Activated CD8-positive, alpha-beta T cell treated with anti-CD3 and anti-CD28 coated beads for 36 hours (primary cell): ENCODE measurements at regions of chr1 and their contacts with region 1.

Region 1: DNA sequence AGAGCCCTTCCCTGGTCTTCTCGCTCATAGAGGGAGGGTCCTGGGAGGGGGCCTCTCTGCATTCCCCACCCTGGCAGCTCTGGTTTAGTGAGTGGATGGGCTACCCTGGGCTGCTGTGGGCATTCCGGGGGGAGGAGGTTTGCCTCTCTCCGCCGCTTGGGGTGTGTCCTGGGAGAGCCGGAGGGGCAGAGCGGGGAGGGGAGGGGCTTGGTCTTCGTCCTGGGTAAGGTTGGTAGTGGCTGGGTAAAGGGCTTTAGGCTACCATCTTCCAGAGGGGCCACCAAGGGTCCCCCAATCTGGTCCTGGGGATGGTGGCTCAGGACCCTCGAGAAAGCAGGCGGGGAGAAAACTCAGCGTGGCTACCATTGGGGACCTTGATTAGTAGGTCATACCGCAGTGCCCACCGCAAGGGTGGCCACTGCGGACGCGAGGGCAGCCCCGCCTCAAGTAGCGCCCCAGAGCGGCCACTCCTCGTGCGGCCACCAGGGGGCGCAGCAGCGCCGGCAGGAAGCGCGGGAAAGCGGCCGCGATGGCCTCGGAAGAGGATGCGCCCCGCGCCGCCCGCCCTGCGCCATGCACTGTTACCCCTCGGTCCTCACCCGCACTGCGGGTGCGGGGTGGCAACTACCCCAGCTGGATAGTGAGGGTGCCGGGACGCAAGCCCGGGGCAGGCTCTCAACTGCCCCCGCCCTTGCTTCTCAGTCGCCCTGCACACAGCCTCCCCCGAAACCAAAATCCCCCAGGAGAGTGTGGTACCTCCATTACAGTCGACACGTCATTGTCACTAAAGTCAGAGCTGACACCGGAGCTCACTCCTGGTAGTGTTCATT is 44.1 kb upstream of the SLC25A33 start:
- DNase-seq: peak; percentile 74
- ATAC-seq: peak; percentile 89
- H3K4me3 Mint-ChIP-seq: peak overlapping the region; percentile 69
- H3K27ac Mint-ChIP-seq: peak overlapping the region; percentile 64
- H3K4me1 Mint-ChIP-seq: peaks cover 5% of the 10 kb centered on the region
- H3K27me3 Mint-ChIP-seq: peaks cover 10% of the 10 kb centered on the region
- CTCF ChIP-seq: peak; percentile 98

Region 2: DNA sequence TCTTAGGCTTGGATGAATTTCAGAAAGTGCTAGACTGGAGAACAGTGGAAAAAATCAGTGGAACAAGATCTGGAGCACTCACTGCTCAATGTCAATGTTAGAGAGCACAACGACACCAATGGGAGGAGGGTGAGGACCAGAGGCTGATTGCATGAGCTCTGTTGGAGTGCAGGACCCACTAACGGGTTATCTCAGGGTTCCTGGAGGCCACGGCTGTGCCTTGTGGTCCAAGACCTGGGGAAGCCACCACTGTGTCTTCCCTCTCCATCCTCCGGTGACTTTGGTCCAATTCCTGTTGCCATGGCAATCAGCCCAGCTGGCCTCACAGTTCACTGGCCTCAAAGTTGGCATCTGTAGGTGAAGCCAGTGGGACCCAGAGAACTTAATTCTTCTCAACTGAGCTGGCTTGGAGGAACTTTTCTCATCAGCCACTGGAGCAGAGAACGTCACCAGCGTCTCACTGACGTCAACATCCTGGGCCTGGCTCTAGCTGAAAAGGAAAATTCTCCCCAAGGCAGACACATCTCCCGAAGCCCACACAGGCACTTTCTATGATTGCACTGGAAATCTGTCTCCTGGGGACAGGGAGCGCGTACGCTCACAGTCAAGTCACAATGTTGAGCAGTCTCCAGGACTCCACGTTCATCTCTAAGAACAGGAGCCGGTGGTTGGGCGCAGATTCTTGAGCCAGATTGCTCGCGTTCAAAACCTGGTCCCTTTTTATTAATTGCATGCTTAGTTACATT is 344.4 kb before region 1 on chr1:
- CTCF ChIA-PET with region 1: no interaction called
- POLR2A ChIA-PET with region 1: no interaction called
- intact Hi-C with region 1: no loop called
- DNase-seq: no peak
- ATAC-seq: no peak
- H3K4me3 Mint-ChIP-seq: no peak overlapping the region
- H3K27ac Mint-ChIP-seq: no peak overlapping the region
- H3K4me1 Mint-ChIP-seq: no peaks in the 10 kb centered on the region
- H3K27me3 Mint-ChIP-seq: no peaks in the 10 kb centered on the region
- CTCF ChIP-seq: no peak

Region 3: GRCh38 chr1:9270290-9270883 is 224.8 kb before region 1 on chr1:
- CTCF ChIA-PET with region 1: interaction called, 36 read pairs
- POLR2A ChIA-PET with region 1: no interaction called
- intact Hi-C with region 1: loop called (anchors 5 kb)
- DNase-seq: no peak
- ATAC-seq: no peak
- H3K4me3 Mint-ChIP-seq: no peak overlapping the region
- H3K27ac Mint-ChIP-seq: no peak overlapping the region
- H3K4me1 Mint-ChIP-seq: peaks cover 5% of the 10 kb centered on the region
- H3K27me3 Mint-ChIP-seq: no peaks in the 10 kb centered on the region
- CTCF ChIP-seq: no peak

Region 4: GRCh38 chr1:9292361-9293240 is 202.5 kb before region 1 on chr1 and contains the start of gene SPSB1:
- CTCF ChIA-PET with region 1: interaction called, 100 read pairs
- POLR2A ChIA-PET with region 1: no interaction called
- intact Hi-C with region 1: loop called (anchors 5 kb)
- DNase-seq: peak; percentile 72
- ATAC-seq: peak; percentile 57
- H3K4me3 Mint-ChIP-seq: peak within 1 kb of the TSS; percentile 30
- H3K27ac Mint-ChIP-seq: no peak within 1 kb of the TSS
- H3K4me1 Mint-ChIP-seq: peaks cover 14% of the 10 kb centered on the region
- H3K27me3 Mint-ChIP-seq: peaks cover 2% of the 10 kb centered on the region
- CTCF ChIP-seq: no peak
- total RNA-seq, gene SPSB1: 1.1 to 1.5 TPM

Region 5: GRCh38 chr1:9321480-9321849 is 173.7 kb before region 1 on chr1:
- CTCF ChIA-PET with region 1: no interaction called
- POLR2A ChIA-PET with region 1: no interaction called
- intact Hi-C with region 1: no loop called
- DNase-seq: no peak
- ATAC-seq: no peak
- H3K4me3 Mint-ChIP-seq: no peak overlapping the region
- H3K27ac Mint-ChIP-seq: no peak overlapping the region
- H3K4me1 Mint-ChIP-seq: peaks cover 16% of the 10 kb centered on the region
- H3K27me3 Mint-ChIP-seq: peaks cover 1% of the 10 kb centered on the region
- CTCF ChIP-seq: no peak

Region 6: DNA sequence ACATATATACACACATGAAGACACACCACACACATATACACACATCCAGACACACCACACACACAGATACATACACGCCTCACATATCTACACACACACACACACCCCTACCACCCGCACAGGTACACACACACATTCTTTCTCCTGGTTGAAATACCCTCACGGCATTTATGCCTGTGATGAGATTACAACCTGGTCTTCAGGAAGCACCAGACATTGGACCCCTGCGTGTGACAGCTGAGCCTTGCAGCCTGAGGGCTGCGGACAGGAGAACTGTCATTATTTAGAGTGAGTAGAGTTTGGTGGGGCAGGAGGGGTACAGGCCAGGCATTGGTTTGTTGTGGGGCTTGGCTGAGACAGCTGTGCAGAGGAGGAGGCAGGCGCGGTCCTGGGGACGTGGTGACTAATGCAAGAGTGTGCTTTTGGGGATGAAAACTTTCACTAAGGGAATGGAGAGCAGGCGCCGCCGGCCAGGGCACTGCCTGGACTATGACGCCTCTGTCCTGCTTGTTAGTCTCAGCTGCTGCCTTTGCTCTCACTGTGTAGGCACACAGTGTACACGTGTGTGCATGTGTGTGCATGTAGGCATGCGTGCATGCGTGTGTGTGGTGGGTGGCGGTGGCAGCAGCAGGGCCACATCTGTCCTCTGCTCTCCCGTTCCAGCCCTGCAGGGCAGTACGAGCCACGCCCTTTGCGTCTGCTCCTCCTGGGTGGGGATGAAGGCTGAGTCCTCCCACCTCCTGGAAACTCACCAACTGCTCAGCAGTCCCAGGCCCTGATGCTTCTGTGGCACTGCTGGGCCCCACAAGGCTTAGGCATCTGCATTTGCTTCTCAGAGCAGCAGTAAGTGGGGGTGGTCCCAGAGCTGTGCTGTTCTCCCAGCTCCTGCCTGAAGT is 144.9 kb before region 1 on chr1:
- CTCF ChIA-PET with region 1: no interaction called
- POLR2A ChIA-PET with region 1: no interaction called
- intact Hi-C with region 1: no loop called
- DNase-seq: no peak
- ATAC-seq: no peak
- H3K4me3 Mint-ChIP-seq: no peak overlapping the region
- H3K27ac Mint-ChIP-seq: no peak overlapping the region
- H3K4me1 Mint-ChIP-seq: no peaks in the 10 kb centered on the region
- H3K27me3 Mint-ChIP-seq: no peaks in the 10 kb centered on the region
- CTCF ChIP-seq: no peak

Region 7: DNA sequence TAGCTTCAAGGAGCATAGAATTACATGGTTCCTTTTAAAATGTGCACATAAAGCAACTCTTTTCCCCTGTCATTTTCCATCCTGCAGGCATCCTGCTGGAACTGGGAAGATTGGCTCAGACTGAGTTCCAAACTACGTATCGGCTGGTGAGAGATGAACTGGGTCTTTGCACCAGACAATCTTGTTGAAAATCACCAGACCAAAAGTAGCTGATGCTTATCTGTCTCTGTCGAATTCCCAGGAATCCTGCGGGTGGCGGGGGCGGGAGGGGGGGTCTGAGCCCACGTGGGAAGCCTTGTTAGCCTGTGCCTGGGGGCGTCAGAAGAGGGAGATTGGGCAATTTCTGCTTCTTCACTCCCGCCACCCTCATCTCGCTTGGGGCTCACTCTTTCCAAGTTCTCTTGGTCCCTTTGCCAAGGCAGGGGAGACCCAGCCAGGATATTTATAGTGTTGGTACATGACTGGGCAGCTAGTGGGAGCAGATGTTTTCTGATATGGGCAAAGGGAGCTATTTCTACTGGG is 46.0 kb before region 1 on chr1:
- CTCF ChIA-PET with region 1: no interaction called
- POLR2A ChIA-PET with region 1: no interaction called
- intact Hi-C with region 1: no loop called
- DNase-seq: no peak
- ATAC-seq: no peak
- H3K4me3 Mint-ChIP-seq: no peak overlapping the region
- H3K27ac Mint-ChIP-seq: no peak overlapping the region
- H3K4me1 Mint-ChIP-seq: no peaks in the 10 kb centered on the region
- H3K27me3 Mint-ChIP-seq: no peaks in the 10 kb centered on the region
- CTCF ChIP-seq: no peak

Region 8: GRCh38 chr1:9473032-9473792 is 21.9 kb before region 1 on chr1:
- CTCF ChIA-PET with region 1: interaction called, 13 read pairs
- POLR2A ChIA-PET with region 1: no interaction called
- intact Hi-C with region 1: no loop called
- DNase-seq: peak; percentile 28
- ATAC-seq: peak; percentile 64
- H3K4me3 Mint-ChIP-seq: no peak overlapping the region
- H3K27ac Mint-ChIP-seq: no peak overlapping the region
- H3K4me1 Mint-ChIP-seq: no peaks in the 10 kb centered on the region
- H3K27me3 Mint-ChIP-seq: peaks cover 6% of the 10 kb centered on the region
- CTCF ChIP-seq: no peak

Region 9: GRCh38 chr1:9573723-9574122 is 78.6 kb after region 1 on chr1:
- CTCF ChIA-PET with region 1: interaction called, 11 read pairs
- POLR2A ChIA-PET with region 1: no interaction called
- intact Hi-C with region 1: loop called (anchors 5 kb)
- DNase-seq: no peak
- ATAC-seq: no peak
- H3K4me3 Mint-ChIP-seq: no peak overlapping the region
- H3K27ac Mint-ChIP-seq: no peak overlapping the region
- H3K4me1 Mint-ChIP-seq: no peaks in the 10 kb centered on the region
- H3K27me3 Mint-ChIP-seq: no peaks in the 10 kb centered on the region
- CTCF ChIP-seq: peak; percentile 35